ENCODE measurements at regions of chr10 and their contacts with region 1.

Region 1: DNA sequence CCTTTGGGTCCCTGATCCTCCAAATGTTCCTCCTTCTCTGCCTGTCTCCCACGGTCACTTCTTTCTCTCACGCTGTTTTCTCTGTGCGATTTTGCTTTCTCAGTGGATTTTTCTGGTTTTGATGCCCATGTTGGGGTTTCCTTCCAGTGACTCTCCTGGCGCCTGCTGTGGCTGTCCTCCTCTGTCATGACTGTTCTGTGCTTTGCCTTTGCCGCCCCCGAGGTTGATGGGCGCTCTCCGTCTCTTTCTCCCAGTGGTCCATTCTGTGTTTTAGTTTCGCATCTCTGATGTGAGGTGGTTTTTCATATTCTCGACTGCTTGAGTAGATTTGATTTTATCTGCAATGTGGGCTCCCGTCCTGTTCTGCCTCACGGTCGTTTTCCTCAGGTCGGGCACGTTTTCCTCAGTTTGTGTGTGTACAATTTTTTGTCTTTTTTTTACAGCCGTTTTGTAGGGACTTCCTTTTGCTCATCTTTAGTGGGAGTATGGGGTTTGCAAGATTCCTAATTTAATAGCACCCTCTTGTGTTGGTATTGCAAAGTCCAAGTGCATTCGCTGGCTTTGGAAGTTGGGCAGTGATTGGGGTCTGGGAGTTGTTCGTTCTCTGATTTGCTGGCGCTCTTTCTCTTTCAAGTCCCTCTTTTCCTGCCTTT is 100.0 kb downstream of the INPP5A start:
- DNase-seq: peak; percentile 5
- H3K4me3 ChIP-seq: no peak overlapping the region
- H3K27ac ChIP-seq: no peak overlapping the region
- H3K4me1 ChIP-seq: peaks cover 60% of the 10 kb centered on the region
- H3K27me3 ChIP-seq: no peaks in the 10 kb centered on the region
- CTCF ChIP-seq: peak; percentile 82

Region 2: DNA sequence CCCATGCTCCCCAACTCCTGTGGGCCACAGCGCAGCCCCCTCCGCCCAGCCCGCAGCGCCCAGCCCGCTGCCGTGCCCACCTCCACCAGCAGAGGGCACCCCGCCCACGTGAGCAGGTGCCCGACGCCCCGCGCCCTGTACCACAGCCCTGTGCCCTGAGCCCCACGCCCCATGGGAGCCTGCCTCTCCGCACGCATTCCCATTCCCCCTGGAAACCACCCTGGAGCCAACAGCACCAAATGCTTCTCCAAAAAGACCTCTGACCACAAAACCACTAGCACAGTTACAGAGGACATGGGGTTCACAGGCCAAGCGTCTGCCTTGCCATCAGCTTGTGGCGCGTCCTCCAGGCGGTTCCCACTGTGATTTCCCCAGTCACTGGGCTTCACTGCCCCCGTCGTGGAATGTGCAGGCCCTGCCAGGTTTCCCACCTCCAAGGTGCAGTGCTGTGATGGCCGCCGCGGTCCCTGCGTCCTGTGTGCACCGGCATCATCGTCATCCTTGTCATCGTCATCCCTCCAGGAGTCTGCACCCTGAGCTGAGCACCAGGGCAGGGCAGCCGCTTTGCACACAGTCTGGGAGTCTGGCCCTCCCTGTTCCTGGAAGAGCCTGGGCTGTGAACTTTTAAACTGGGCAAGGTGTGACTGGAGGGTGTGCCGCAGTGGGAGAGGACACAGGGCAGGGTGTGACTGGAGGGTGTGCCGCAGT is 178.9 kb before region 1 on chr10:
- intact Hi-C with region 1: loop called (anchors 2 kb)
- DNase-seq: no peak
- H3K4me3 ChIP-seq: no peak overlapping the region
- H3K27ac ChIP-seq: no peak overlapping the region
- H3K4me1 ChIP-seq: peaks cover 39% of the 10 kb centered on the region
- H3K27me3 ChIP-seq: peaks cover 22% of the 10 kb centered on the region
- CTCF ChIP-seq: peak; percentile 97

Region 3: DNA sequence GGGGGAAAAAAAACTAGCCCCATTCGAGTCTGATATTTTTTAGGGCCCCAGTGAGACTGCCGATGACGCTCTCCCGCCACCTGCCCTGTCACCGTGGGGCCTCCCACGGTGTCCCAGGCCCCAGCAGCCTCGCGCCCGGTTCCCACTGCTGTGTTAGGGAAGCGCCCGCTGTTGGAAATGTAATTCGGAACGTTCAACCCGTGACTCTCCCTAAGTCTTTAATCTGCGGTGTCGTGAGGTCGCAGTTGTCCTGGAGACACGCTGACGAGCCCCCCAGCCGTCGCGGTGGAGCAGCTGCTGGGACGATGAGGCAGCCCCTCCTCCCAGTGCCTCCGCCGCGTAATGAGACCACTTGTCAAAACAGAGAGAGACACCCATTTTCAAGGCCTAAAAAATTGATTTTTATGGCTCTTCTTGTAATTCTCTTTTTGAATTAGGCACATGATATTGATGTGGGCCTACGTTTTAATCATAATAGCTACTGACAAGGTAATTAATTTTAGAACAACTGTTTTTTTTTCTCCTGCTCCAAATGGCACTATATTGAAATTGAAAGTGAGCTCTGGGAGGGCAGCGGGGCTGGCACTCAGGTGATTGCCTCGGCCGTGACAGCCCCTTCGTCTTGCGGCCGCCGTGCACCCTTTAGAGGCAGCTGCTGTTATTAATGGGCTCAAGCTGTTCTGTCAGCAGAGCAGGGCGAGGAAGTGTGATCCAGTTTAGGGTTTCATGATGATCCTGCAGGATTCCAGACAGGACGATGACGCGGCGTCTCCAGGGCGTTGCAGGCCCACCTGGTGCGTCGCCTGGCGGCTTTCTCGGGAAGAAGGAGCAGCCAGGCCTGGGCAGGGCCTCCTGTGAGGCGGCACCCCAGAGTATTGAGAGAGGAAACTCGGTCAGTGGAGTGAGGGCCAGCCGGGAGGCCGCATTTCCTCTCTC is 85.1 kb after region 1 on chr10:
- intact Hi-C with region 1: no loop called
- DNase-seq: no peak
- H3K4me3 ChIP-seq: no peak overlapping the region
- H3K27ac ChIP-seq: peak overlapping the region; percentile 13
- H3K4me1 ChIP-seq: no peaks in the 10 kb centered on the region
- H3K27me3 ChIP-seq: no peaks in the 10 kb centered on the region
- CTCF ChIP-seq: peak; percentile 33

Measured in left ventricle myocardium inferior (tissue), 1 donor.